Activated CD4-positive, alpha-beta T cell treated with anti-CD3 and anti-CD28 coated beads, Interleukin-2, amount 10 ng/mL, durations not matched to agents 24 days and 14 days (primary cell): ENCODE measurements at regions of chr4 and their contacts with region 1.

Region 1: DNA sequence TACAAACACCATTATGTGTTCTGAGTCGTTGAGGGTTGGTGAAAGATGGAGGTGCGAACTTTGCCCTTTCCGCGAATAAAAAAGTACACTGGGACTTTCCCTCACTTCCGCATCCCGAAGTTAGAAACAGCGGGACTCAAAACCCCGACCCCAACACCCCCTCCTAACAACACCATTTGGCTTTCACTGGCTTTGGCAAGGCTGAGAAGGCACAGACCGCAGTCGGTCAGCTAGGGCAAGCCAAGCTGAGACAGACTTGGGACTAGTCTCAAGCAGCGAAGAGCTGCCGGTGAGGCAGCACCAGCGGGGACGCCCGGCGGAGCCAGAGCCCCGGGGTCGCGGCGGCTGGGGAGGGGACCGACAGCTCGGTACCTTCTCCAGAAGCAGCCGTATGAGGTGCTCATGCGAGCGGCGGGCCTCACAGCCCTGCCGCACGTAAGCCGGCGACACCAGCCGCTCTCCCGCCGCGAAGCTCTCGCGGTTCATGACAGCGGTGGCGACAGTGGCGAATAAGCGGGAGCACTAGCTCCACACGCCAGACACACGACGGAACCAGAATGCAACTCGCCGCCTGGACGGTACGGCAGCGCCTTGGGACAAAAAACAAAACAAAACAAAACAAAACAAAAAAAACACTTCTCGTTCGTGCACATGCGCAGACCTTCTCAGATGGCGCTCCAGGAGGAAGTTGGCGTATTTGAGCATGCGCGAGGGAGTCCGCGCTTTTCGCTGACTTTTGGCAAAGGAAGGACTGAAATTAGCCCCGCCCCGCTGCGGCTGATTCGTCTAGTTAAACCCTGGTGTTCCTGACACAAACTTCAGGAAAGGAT is at the start of gene SEPSECS:
- DNase-seq: peak; percentile 98
- H3K4me3 Mint-ChIP-seq: peak within 1 kb of the TSS; percentile 85
- H3K27ac Mint-ChIP-seq: peak within 1 kb of the TSS; percentile 100
- H3K4me1 Mint-ChIP-seq: peaks cover 33% of the 10 kb centered on the region
- H3K27me3 Mint-ChIP-seq: peaks cover 2% of the 10 kb centered on the region
- total RNA-seq, gene SEPSECS: 12.0 and 13.2 TPM in 2 replicates

Region 2: GRCh38 chr4:24472514-24473308 is 687.4 kb before region 1 on chr4:
- intact Hi-C with region 1: loop called (anchors 5 kb)
- DNase-seq: peak; percentile 86
- H3K4me3 Mint-ChIP-seq: peak overlapping the region; percentile 90
- H3K27ac Mint-ChIP-seq: peak overlapping the region; percentile 79
- H3K4me1 Mint-ChIP-seq: peaks cover 28% of the 10 kb centered on the region
- H3K27me3 Mint-ChIP-seq: peaks cover 71% of the 10 kb centered on the region

Region 3: GRCh38 chr4:25043548-25043947 is 116.6 kb before region 1 on chr4:
- intact Hi-C with region 1: no loop called
- DNase-seq: no peak
- H3K4me3 Mint-ChIP-seq: no peak overlapping the region
- H3K27ac Mint-ChIP-seq: no peak overlapping the region
- H3K4me1 Mint-ChIP-seq: no peaks in the 10 kb centered on the region
- H3K27me3 Mint-ChIP-seq: peaks cover 10% of the 10 kb centered on the region

Region 4: DNA sequence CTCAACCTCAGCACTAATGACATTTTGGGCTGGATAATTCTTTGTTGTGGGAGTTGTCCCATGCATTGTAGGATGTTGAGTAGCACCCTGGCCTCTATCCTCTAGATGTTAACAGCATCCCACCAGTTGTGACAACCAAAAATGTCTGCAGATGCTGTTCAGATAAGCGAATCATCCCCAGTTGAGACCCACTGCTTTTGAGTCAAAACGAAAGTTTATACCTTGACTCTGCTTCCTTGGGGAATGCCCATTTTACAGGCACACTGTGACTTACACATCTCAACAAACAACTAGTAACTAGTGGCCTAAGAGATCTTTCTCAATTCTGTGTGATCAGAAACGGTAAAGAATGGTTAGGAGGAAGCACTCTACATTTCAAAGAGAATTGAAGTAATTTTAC is 36.9 kb before region 1 on chr4:
- intact Hi-C with region 1: loop called (anchors 2 kb)
- DNase-seq: peak; percentile 69
- H3K4me3 Mint-ChIP-seq: peak overlapping the region; percentile 23
- H3K27ac Mint-ChIP-seq: peak overlapping the region; percentile 56
- H3K4me1 Mint-ChIP-seq: peaks cover 14% of the 10 kb centered on the region
- H3K27me3 Mint-ChIP-seq: no peaks in the 10 kb centered on the region

Region 5: DNA sequence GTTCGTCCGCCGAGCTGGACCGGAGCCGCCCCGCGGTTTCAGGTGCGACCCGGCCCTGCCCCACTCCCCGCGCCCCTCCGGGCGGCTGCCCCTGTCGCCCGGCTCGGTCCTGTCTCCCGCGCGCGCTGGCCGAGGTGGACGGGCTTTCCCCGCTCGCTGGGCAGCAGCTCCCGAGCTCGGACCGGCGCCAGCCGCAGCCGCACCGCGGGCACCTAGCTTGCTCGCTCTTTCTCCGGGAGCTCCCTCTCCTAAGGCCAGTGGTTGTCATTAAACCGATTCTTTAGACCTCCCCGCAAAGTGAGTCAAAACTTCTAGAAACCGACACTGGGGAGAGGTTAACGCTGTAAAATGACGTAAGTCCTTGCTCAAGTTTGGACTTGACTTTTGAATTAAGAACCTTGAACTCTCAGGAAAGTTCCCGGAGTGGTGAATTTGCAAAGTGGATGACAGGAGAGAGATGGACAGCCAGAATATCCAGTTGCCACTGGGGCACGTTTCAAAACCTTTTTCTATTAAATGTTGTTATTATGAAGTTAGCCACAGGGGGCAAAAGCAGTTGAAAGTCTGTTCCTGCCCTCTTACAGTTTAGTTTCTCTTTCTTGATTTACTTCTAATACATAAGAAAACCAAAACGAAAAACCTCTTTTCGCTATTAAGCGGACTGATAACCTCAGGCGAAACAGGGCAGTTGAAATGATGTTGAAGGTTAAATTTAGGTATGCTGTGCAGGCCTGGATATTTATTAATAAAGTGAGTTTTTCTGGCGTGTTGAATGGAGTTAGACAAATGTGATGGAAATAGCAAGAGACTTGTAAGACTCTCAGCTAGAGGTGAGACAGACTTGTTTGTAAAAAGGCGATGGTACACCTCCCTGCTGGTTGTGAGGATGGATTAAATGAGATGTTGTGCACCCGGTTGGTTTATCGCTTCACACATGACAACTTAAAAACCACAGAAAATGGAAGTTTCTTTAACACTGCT is 74.6 kb after region 1 on chr4:
- intact Hi-C with region 1: loop called (anchors 1 kb)
- DNase-seq: peak; percentile 83
- H3K4me3 Mint-ChIP-seq: peak overlapping the region; percentile 86
- H3K27ac Mint-ChIP-seq: peak overlapping the region; percentile 93
- H3K4me1 Mint-ChIP-seq: peaks cover 21% of the 10 kb centered on the region
- H3K27me3 Mint-ChIP-seq: no peaks in the 10 kb centered on the region

Region 6: DNA sequence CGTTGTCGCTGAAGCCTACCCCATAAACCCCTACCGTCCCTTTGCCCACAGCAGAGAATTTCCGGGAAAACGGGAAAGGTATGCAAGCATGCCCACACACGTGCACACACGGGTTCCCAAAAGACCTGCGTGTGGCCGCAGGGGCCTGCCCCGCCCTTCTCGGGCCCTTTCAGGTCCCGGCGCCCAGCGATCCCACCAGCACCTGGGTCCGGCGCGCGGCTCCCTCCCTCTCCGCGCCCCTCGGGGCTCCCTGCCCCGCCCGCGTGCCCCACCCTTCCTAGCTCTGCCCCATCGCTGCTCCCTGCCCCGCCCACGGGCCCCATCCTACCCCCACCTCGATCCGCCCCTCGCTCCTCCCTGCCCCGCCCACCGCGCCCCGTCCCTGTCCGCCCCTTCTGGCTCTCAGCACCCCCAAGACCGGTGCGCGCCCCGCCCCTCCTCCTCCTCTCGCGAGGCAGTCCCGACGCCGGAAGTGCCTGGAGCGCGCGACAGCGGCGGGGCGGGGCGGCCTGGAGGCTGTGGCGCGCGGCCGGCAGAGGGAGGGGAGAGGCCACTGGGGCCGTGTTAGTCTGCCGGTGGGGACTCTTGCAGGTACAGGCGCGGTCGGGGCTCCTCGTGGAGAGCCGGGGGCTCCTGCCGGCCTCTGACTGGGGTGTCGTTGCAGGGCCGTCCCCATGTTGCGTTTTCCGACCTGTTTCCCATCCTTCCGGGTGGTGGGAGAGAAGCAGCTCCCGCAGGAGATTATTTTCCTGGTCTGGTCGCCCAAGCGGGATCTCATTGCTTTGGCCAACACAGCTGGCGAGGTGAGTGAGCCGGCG is 216.9 kb after region 1 on chr4 and contains the start of gene ANAPC4:
- intact Hi-C with region 1: loop called (anchors 1 kb)
- DNase-seq: peak; percentile 99
- H3K4me3 Mint-ChIP-seq: no peak within 1 kb of the TSS
- H3K27ac Mint-ChIP-seq: peak within 1 kb of the TSS; percentile 87
- H3K4me1 Mint-ChIP-seq: peaks cover 8% of the 10 kb centered on the region
- H3K27me3 Mint-ChIP-seq: no peaks in the 10 kb centered on the region
- total RNA-seq, gene ANAPC4: 37.4 and 42.1 TPM in 2 replicates

Region 7: DNA sequence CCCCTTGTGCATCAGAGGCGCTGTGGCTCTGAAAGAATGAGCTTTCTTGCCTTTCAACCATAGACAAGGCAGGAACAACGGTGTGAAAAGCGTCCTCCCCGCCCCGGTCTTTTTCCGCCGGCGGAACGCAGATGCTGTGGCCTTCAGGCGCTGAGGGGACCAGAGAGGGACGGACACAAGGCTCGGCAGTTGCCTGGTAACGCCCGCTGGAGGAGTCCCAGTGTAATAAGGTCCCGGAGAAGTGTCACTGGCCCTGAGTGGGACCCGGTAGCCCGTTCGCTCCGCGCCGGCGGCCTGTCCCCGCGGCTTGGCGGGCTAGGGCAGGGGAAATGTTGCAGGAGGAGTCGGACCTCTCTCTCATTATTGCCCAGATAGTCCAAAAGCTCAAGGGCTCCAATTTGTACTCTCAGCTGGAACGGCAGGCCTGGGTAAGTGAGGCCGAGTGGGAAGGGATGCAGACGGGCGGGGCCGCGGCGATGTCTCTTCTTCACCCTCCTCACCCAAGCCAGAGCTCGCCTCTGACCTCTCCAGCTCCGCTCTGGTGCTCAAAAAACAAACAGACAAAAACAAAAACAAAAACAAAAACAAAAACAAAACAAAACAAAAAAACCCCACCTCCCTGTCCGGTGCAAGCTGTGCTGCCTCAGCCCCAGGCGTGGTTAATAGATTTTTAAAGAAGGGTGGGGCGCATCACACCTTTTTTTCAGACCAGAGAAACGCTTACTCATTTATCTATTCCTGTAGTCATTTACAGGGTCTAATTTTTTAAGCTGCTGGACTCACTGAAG is 1424.0 kb after region 1 on chr4 and contains the start of gene TBC1D19:
- intact Hi-C with region 1: loop called (anchors 10 kb)
- DNase-seq: peak; percentile 96
- H3K4me3 Mint-ChIP-seq: peak within 1 kb of the TSS; percentile 98
- H3K27ac Mint-ChIP-seq: peak within 1 kb of the TSS; percentile 95
- H3K4me1 Mint-ChIP-seq: peaks cover 27% of the 10 kb centered on the region
- H3K27me3 Mint-ChIP-seq: no peaks in the 10 kb centered on the region
- total RNA-seq, gene TBC1D19: 3.3 and 3.6 TPM in 2 replicates